ENCODE measurements at regions of chr1 and their contacts with region 1.

Region 1: DNA sequence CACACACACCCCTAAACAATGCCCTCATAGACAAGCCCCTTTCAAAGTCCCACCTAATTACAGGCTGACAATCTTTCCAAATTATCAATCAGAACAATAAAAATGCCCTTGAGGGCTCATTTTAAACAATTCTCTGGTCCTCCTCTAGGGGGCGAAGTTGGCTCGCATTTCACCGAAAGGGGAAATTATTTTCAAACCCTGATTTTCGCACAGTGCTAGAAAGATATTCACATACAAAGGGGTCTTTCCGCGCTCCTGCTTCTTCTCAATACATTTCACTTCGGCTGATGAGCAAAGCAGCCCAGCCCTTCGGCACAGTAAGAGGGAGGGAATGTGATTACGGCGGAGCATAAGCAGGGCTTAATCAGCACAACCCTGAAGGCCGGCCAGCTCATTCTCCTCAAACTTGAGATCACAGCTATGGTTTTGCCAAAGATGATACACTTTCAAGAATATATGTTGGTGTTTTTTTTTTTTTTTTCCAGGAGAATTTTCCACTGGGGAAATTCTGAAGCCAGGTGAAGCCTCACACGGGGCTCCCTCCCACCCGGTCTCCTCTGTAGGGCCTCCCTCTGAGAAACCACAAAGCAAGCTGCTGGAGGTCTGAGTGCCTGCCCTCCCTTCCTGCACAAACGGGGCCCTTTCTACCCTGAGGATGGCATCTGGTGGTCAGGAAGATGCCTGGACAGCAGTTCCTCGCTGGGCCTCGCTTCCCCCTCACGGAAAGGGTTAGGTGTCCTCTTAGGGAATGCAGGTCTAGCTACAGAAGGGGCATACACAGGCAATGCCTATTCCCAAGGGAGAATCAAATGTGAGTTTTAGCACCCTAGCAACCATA is 66.9 kb downstream of the GNG12 start:
- DNase-seq: peak; percentile 73
- H3K4me3 ChIP-seq: peak overlapping the region; percentile 37
- H3K27ac ChIP-seq: peak overlapping the region; percentile 87
- H3K27me3 ChIP-seq: no peaks in the 10 kb centered on the region
- CTCF ChIP-seq: peak; percentile 76

Region 2: DNA sequence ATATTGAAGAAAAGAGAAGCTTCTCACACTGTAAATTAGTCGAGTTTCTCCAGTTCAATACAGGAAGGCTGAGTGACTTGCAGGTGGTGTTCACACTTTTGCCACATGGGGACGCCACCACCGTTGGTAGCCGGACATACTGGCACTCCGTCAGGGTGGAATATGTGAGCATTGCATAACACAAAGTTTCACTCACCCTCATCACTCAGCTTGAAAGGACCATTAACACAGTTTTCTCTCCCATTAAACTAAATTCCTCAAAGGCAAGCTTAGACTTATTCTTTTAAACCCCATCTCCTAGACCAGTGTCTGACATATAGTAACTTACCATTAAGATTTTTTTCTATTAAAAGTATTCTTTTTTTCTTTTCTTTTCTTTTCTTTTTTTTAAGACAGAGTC is 230.9 kb before region 1 on chr1:
- CTCF ChIA-PET with region 1: interaction called, 456 read pairs
- POLR2A ChIA-PET with region 1: no interaction called
- DNase-seq: peak; percentile 65
- H3K4me3 ChIP-seq: no peak overlapping the region
- H3K27ac ChIP-seq: no peak overlapping the region
- H3K27me3 ChIP-seq: no peaks in the 10 kb centered on the region
- CTCF ChIP-seq: peak; percentile 99

Region 3: GRCh38 chr1:67685067-67685557 is 81.2 kb before region 1 on chr1 and contains the start of gene GADD45A:
- CTCF ChIA-PET with region 1: interaction called, 51 read pairs
- POLR2A ChIA-PET with region 1: interaction called, 16 read pairs
- DNase-seq: peak; percentile 99
- H3K4me3 ChIP-seq: peak within 1 kb of the TSS; percentile 89
- H3K27ac ChIP-seq: peak within 1 kb of the TSS; percentile 97
- H3K27me3 ChIP-seq: no peaks in the 10 kb centered on the region
- CTCF ChIP-seq: no peak
- polyA plus RNA-seq, gene GADD45A: 33.7 and 41.8 TPM in 2 replicates

Region 4: GRCh38 chr1:67785847-67786753 is 19.7 kb after region 1 on chr1:
- CTCF ChIA-PET with region 1: interaction called, 29 read pairs
- POLR2A ChIA-PET with region 1: no interaction called
- DNase-seq: no peak
- H3K4me3 ChIP-seq: no peak overlapping the region
- H3K27ac ChIP-seq: no peak overlapping the region
- H3K27me3 ChIP-seq: no peaks in the 10 kb centered on the region
- CTCF ChIP-seq: no peak

Region 5: DNA sequence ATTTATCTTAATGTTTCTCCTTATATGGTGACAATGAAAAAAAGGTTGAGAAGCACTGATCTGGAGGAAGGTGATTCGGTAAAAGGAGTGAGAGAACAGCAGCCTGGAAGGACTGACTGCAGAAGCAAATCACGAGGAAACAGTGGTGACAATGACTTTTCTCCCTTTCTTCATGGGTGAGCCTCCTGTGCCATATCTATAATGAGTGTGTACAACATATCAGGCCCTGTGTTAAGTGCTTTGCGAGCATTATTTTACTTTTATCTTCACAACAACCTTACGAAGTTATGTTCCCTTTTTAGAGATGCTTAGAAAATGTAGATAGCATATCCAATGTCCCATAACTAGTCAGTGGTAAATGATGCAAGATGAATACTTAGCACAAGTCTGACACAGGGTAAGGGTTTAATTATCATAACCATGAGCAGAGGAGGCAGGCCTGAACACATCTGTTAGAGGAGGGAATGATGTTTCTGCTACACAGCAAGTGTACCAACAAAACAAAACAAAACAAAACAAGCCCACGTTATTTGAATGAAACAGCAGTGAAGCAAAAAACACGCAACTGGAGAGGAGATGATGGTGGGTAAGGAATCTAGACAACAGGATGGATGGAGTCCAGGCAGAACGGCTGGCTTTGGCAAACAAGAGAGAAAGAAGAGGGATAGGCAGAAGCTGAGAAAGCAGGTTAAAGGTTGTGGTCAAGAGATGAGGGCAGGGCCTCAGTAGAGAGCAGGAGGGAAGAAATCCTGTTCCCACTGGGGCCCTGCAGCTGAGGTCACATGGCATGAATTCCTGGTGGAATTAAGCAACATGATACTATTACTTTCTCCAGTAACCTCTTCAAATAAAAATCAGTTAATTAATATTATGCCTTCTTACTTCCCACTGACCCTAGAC is 37.3 kb after region 1 on chr1:
- CTCF ChIA-PET with region 1: interaction called, 13 read pairs
- POLR2A ChIA-PET with region 1: no interaction called
- DNase-seq: no peak
- H3K4me3 ChIP-seq: no peak overlapping the region
- H3K27ac ChIP-seq: no peak overlapping the region
- H3K27me3 ChIP-seq: no peaks in the 10 kb centered on the region
- CTCF ChIP-seq: no peak

Region 6: DNA sequence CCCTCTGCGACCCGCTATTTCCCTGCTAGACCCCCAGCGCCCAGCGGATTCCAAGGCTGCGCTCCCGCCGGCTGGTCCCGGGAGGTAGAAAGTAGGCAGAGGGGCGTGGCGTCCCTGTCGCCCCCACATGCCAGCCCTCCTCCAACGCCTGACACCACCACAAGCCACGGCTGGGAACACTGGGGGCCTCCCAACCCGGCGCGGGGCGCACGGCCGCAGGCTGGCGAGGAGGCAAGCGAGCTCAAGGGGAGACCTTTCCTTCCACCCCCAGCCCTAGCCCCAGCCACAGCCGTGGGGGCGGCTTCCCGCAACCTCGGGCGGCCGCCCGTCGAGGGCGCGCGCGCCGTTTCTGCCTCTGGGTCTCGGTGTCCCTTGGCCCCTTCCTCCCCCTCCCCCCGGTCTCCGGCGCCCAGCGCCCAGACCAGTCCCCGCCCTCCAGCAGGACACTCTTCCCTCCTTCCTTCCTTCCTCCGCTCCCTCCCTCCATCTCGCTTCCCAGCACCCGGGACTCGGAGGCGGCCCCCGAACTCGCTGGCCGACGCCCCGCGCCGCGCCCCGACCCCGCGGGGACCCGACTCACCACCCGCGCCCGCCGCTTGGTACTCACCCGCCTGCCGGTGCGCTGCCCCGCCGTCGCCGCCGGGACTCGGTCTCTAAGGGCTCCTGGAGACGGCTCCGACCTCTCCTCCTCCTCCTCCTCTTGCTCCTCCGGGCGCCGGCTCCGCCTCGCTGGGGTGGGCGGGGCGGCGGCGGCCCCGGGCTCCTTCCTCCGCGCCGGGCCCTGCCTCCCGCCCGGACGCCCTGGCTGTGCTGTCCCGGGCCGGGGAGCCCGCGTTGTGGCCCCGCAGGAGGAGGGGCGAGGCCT is 66.6 kb after region 1 on chr1 and contains the start of gene GNG12:
- CTCF ChIA-PET with region 1: interaction called, 35 read pairs
- POLR2A ChIA-PET with region 1: interaction called, 4 read pairs
- DNase-seq: no peak
- H3K4me3 ChIP-seq: peak within 1 kb of the TSS; percentile 83
- H3K27ac ChIP-seq: peak within 1 kb of the TSS; percentile 85
- H3K27me3 ChIP-seq: no peaks in the 10 kb centered on the region
- CTCF ChIP-seq: no peak
- polyA plus RNA-seq, gene GNG12: 140 and 185 TPM in 2 replicates

Region 7: GRCh38 chr1:68010090-68010489 is 243.7 kb after region 1 on chr1:
- CTCF ChIA-PET with region 1: interaction called, 37 read pairs
- POLR2A ChIA-PET with region 1: no interaction called
- DNase-seq: no peak
- H3K4me3 ChIP-seq: no peak overlapping the region
- H3K27ac ChIP-seq: no peak overlapping the region
- H3K27me3 ChIP-seq: no peaks in the 10 kb centered on the region
- CTCF ChIP-seq: peak; percentile 65

Measured in AG04450 (cell line).